ENCODE measurements at regions of chr1 and their contacts with region 1.

Region 1: GRCh38 chr1:223352944-223353343 is 11.0 kb downstream of the SUSD4 start:
- DNase-seq: no peak
- ATAC-seq: no peak

Region 2: GRCh38 chr1:223363856-223364684 is 11.1 kb after region 1 on chr1 and contains the start of gene SUSD4:
- intact Hi-C with region 1: loop called (anchors 1 kb)
- DNase-seq: no peak
- ATAC-seq: peak; percentile 65
- total RNA-seq, gene SUSD4: not detected

Measured in sciatic nerve (tissue), 2 donors.